ENCODE measurements at regions of chr21 and their contacts with region 1.

Region 1: DNA sequence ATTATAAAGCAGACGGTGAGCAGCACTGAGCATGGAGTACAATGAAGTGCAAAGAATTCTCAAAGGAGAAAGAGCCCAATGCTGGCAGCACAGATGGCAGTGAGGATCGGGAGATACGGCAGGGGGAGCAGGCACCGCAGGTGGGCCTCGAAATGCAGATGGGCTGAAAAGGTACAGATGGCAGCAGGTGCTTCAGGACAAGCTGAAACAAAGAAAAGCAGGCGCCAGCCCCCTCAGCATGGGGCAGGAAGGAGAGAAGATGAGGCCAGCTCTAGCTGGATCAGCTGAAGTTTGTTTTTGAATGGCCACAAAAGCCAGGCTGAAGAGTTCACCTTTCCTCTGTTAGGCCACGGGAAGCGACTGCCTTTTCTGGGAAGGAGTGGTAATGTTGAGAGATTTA is 7.7 kb downstream of the CFAP298 start:
- DNase-seq: no peak
- H3K4me3 ChIP-seq: no peak overlapping the region
- H3K27ac ChIP-seq: no peak overlapping the region
- H3K4me1 ChIP-seq: no peaks in the 10 kb centered on the region
- H3K27me3 ChIP-seq: no peaks in the 10 kb centered on the region
- CTCF ChIP-seq: no peak
- EP300 ChIP-seq: no peak
- POLR2A ChIP-seq: no peak

Region 2: GRCh38 chr21:32392880-32393676 is 211.4 kb before region 1 on chr21 and contains the start of gene URB1:
- intact Hi-C with region 1: loop called (anchors 10 kb)
- DNase-seq: peak; percentile 93 to 97
- H3K4me3 ChIP-seq: peak within 1 kb of the TSS; percentile 98 to 100 (median 100)
- H3K27ac ChIP-seq: peak within 1 kb of the TSS; percentile 88 to 94 (median 90)
- H3K4me1 ChIP-seq: peaks cover 15 to 35% (median 25%) of the 10 kb centered on the region in 4 donors
- H3K27me3 ChIP-seq: peaks cover 0 to 6% (median 0%) of the 10 kb centered on the region in 3 donors
- CTCF ChIP-seq: no peak
- EP300 ChIP-seq: no peak
- POLR2A ChIP-seq: peak in 1 of 4 donors; percentile 27
- total RNA-seq, gene URB1: 9.3 to 16.3 (median 15.4) TPM

Region 3: GRCh38 chr21:32520875-32521735 is 83.4 kb before region 1 on chr21:
- intact Hi-C with region 1: no loop called
- DNase-seq: peak; percentile 54 to 85
- H3K4me3 ChIP-seq: no peak overlapping the region
- H3K27ac ChIP-seq: peak overlapping the region in 4 of 5 donors; percentile 59 to 76 (median 71)
- H3K4me1 ChIP-seq: peaks cover 6 to 21% (median 8%) of the 10 kb centered on the region in 4 donors
- H3K27me3 ChIP-seq: no peaks in the 10 kb centered on the region
- CTCF ChIP-seq: no peak
- EP300 ChIP-seq: no peak
- POLR2A ChIP-seq: no peak

Measured in stomach (tissue), 19 donors.